ENCODE measurements at regions of chr1 and their contacts with region 1.

Region 1: GRCh38 chr1:205273551-205273982 is 45.8 kb downstream of the TMCC2 start:
- DNase-seq: peak; percentile 77 to 87 (median 80)
- ATAC-seq: peak; percentile 93
- H3K4me3 ChIP-seq: peak overlapping the region; percentile 35
- H3K4me3 Mint-ChIP-seq: peak overlapping the region in 9 of 10 donors; percentile 60 to 77 (median 73)
- H3K27ac ChIP-seq: no peak overlapping the region
- H3K27ac Mint-ChIP-seq: peak overlapping the region in 8 of 9 donors; percentile 70 to 93 (median 80)
- H3K4me1 ChIP-seq: peaks cover 22 to 42% of the 10 kb centered on the region in 2 donors
- H3K4me1 Mint-ChIP-seq: peaks cover 16 to 48% (median 36%) of the 10 kb centered on the region in 7 donors
- H3K27me3 ChIP-seq: no peaks in the 10 kb centered on the region
- H3K27me3 Mint-ChIP-seq: peaks cover 0 to under 1% (median 0%) of the 10 kb centered on the region in 5 donors

Region 2: GRCh38 chr1:205214756-205215155 is 58.8 kb before region 1 on chr1:
- CTCF ChIA-PET with region 1: no interaction called
- POLR2A ChIA-PET with region 1: no interaction called
- intact Hi-C with region 1: no loop called
- DNase-seq: no peak
- ATAC-seq: no peak
- H3K4me3 ChIP-seq: no peak overlapping the region
- H3K4me3 Mint-ChIP-seq: peak overlapping the region in 8 of 10 donors; percentile 41 to 73 (median 61)
- H3K27ac ChIP-seq: no peak overlapping the region
- H3K27ac Mint-ChIP-seq: peak overlapping the region in 6 of 9 donors; percentile 16 to 77 (median 59)
- H3K4me1 ChIP-seq: peaks cover 8% of the 10 kb centered on the region in 2 donors
- H3K4me1 Mint-ChIP-seq: peaks cover 12 to 46% (median 36%) of the 10 kb centered on the region in 7 donors
- H3K27me3 ChIP-seq: no peaks in the 10 kb centered on the region
- H3K27me3 Mint-ChIP-seq: peaks cover 0 to 11% (median 4%) of the 10 kb centered on the region in 5 donors

Region 3: GRCh38 chr1:205227584-205228006 is 46.0 kb before region 1 on chr1 and contains the start of gene TMCC2:
- CTCF ChIA-PET with region 1: interaction called, 4 read pairs
- POLR2A ChIA-PET with region 1: no interaction called
- intact Hi-C with region 1: loop called in 1 of 2 experiments (anchors 5 kb)
- DNase-seq: peak; percentile 57 to 87 (median 73)
- ATAC-seq: peak; percentile 86
- H3K4me3 ChIP-seq: peak within 1 kb of the TSS; percentile 75
- H3K4me3 Mint-ChIP-seq: peak within 1 kb of the TSS; percentile 86 to 99 (median 94)
- H3K27ac ChIP-seq: peak within 1 kb of the TSS; percentile 1
- H3K27ac Mint-ChIP-seq: peak within 1 kb of the TSS; percentile 43 to 90 (median 82)
- H3K4me1 ChIP-seq: peaks cover 10 to 13% of the 10 kb centered on the region in 2 donors
- H3K4me1 Mint-ChIP-seq: peaks cover 12 to 51% (median 18%) of the 10 kb centered on the region in 7 donors
- H3K27me3 ChIP-seq: no peaks in the 10 kb centered on the region
- H3K27me3 Mint-ChIP-seq: peaks cover 0 to 44% (median 4%) of the 10 kb centered on the region in 5 donors
- total RNA-seq, gene TMCC2: 1.1 to 3.6 (median 1.8) TPM

Region 4: DNA sequence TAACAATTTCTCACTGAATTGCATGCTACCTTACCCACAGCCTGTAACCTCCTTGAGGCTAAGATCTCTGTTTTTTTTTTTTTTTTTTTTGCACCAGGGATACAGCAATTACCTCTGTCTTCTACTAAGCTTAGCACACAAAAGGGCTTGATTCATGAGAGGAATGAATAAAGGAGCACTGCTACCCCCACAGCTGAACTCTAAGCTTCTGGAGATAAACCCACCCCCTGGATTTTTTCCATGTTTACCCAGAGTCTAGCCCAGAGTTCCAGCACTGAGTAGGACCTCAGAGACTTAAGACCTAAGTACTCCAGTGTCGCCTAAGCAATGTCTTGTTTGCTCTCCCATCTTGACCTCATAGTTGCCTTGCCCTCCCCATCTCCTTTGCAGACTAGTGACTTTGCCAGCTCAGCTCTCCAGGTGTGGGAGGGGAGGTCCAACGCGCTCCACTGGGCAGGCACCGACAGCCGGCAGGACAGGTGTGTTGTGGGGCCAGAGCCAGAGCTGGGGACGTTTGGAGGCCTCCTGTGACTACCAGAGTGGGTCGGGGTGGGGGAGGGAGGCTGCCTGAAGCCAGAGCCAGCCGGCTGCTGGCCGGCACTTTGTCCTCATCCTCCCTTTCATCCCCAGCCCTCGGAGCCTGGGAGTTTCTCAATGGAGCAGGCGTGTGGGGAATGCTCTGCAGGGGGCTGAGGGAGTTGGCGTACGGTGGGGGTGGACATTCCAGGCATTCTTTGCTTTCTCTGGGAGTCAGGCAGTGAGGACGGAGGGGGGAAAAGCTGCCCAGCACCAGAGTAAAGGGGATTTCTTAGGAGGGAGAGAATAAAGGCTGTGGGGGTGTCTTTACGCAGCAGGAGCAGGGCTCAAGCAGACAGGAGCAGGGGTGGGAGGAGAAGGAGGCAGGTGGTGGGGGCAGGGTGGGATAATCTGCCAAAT is 27.6 kb after region 1 on chr1:
- CTCF ChIA-PET with region 1: interaction called, 12 read pairs
- POLR2A ChIA-PET with region 1: interaction called, 40 read pairs
- intact Hi-C with region 1: no loop called
- DNase-seq: no peak
- ATAC-seq: no peak
- H3K4me3 ChIP-seq: no peak overlapping the region
- H3K4me3 Mint-ChIP-seq: no peak overlapping the region
- H3K27ac ChIP-seq: no peak overlapping the region
- H3K27ac Mint-ChIP-seq: peak overlapping the region in 8 of 9 donors; percentile 25 to 84 (median 75)
- H3K4me1 ChIP-seq: peaks cover 3 to 7% of the 10 kb centered on the region in 2 donors
- H3K4me1 Mint-ChIP-seq: peaks cover 30 to 73% (median 57%) of the 10 kb centered on the region in 7 donors
- H3K27me3 ChIP-seq: no peaks in the 10 kb centered on the region
- H3K27me3 Mint-ChIP-seq: peaks cover 0 to 2% (median 0%) of the 10 kb centered on the region in 5 donors

Region 5: GRCh38 chr1:205354259-205354904 is 80.8 kb after region 1 on chr1:
- CTCF ChIA-PET with region 1: interaction called, 20 read pairs
- POLR2A ChIA-PET with region 1: no interaction called
- intact Hi-C with region 1: loop called (anchors 1 kb)
- DNase-seq: peak in 8 of 9 donors; percentile 24 to 67 (median 52)
- ATAC-seq: peak; percentile 82
- H3K4me3 ChIP-seq: no peak overlapping the region
- H3K4me3 Mint-ChIP-seq: no peak overlapping the region
- H3K27ac ChIP-seq: no peak overlapping the region
- H3K27ac Mint-ChIP-seq: peak overlapping the region in 1 of 9 donors; percentile 32
- H3K4me1 ChIP-seq: no peaks in the 10 kb centered on the region
- H3K4me1 Mint-ChIP-seq: peaks cover 0 to 4% (median 0%) of the 10 kb centered on the region in 7 donors
- H3K27me3 ChIP-seq: no peaks in the 10 kb centered on the region
- H3K27me3 Mint-ChIP-seq: peaks cover 16 to 37% (median 20%) of the 10 kb centered on the region in 5 donors

Region 6: DNA sequence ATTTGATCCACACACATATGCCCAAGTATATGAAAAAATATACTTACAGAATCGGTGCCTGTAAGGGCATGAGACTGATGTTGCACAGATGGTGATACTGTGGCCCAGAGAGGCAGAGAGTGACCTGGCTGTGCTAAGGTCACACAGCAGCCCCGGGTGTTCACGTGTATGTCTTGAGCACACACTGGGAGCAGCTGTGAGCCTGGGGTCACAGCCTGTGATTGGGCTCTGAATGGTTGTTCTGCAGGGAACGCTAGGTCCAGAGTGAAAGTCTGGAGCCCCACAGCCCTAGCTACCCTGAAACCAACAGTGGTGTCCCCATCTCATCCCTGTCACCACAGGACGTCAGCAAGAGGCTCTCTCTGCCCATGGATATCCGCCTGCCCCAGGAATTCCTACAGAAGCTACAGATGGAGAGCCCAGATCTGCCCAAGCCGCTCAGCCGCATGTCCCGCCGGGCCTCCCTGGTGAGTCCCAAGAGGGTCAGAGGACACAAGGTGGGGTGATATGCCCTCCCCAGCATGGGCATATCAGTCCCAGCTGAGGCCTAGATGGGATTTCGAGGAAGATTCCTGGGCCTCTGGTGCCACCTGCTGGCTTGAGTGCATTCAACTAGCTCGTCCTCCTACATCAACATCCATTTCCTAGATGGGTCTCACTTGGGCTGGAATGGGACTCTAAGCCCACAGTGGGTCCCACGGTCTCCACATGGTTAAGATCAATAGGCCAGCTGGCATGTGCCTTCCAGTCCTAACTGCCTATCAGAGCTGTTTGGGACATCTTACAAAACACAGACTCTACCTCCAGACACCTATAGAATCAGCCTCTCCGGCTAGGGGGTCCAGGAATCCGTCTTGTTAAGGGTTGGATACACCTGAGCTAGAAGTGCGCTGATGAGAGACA is 250.6 kb after region 1 on chr1:
- CTCF ChIA-PET with region 1: interaction called, 26 read pairs
- POLR2A ChIA-PET with region 1: no interaction called
- intact Hi-C with region 1: loop called (anchors 1 to 2 kb)
- DNase-seq: peak; percentile 42 to 69 (median 62)
- ATAC-seq: peak; percentile 60
- H3K4me3 ChIP-seq: no peak overlapping the region
- H3K4me3 Mint-ChIP-seq: no peak overlapping the region
- H3K27ac ChIP-seq: no peak overlapping the region
- H3K27ac Mint-ChIP-seq: no peak overlapping the region
- H3K4me1 ChIP-seq: no peaks in the 10 kb centered on the region
- H3K4me1 Mint-ChIP-seq: peaks cover 0 to 3% (median 0%) of the 10 kb centered on the region in 7 donors
- H3K27me3 ChIP-seq: no peaks in the 10 kb centered on the region
- H3K27me3 Mint-ChIP-seq: peaks cover 0 to 4% (median 0%) of the 10 kb centered on the region in 5 donors